Sigmoid colon (tissue), 7 donors: ENCODE measurements at regions of chr5 and their contacts with region 1.

Region 1: GRCh38 chr5:140145818-140146522 is 20.2 kb downstream of the IGIP start:
- DNase-seq: peak; percentile 85
- H3K4me3 ChIP-seq: peak overlapping the region; percentile 25 to 50 (median 47)
- H3K27ac ChIP-seq: peak overlapping the region in 1 of 4 donors; percentile 45
- H3K4me1 ChIP-seq: peaks cover 0 to 28% (median 22%) of the 10 kb centered on the region in 4 donors
- H3K27me3 ChIP-seq: no peaks in the 10 kb centered on the region
- CTCF ChIP-seq: peak in 3 of 4 experiments; percentile 2 to 84 (median 51)
- EP300 ChIP-seq: no peak
- POLR2A ChIP-seq: no peak

Region 2: DNA sequence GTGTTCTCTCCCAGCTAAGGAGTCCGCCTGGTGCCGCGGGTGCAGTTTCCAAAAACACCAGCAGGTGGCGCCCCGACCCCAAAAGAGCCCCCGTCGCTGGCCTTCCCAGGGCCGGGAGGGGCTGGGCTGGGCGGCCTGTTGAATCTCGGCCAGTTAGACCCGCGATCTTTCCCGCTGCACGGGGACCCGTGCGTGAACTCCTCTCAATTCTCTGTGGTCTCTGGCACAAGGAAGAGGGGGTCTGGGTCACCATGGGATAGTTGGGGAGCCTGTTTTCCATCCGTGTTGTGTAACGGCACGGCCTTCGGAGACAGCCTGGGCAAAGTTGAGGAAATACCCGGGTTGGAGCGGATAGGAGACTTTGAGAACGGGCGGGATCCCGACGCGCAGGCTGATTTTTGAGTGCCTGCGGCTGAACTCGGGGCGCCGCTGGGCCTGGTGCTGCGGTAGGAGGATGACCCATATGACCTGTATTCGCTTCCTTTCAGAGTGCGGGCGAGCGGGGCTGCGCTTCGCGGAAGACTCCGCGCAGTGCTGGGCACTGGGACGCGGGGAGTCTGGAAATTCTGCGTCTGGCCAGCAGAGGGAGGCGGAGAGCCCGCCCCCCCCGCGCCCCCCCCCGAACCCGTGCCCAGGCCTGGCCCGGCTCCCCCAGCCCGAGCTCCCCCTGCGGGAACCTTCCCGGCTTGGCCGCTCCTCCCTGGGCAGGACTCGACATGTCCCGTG is 358.2 kb before region 1 on chr5:
- intact Hi-C with region 1: loop called (anchors 5 kb)
- DNase-seq: peak; percentile 92
- H3K4me3 ChIP-seq: peak overlapping the region; percentile 42 to 64 (median 56)
- H3K27ac ChIP-seq: peak overlapping the region; percentile 67 to 76 (median 70)
- H3K4me1 ChIP-seq: peaks cover 0 to 13% (median 10%) of the 10 kb centered on the region in 4 donors
- H3K27me3 ChIP-seq: no peaks in the 10 kb centered on the region
- CTCF ChIP-seq: peak; percentile 80 to 98 (median 90)
- EP300 ChIP-seq: no peak
- POLR2A ChIP-seq: no peak

Region 3: GRCh38 chr5:139863855-139864558 is 282.0 kb before region 1 on chr5:
- intact Hi-C with region 1: loop called (anchors 10 kb)
- DNase-seq: peak; percentile 83
- H3K4me3 ChIP-seq: no peak overlapping the region
- H3K27ac ChIP-seq: peak overlapping the region in 2 of 4 donors; percentile 53 to 54
- H3K4me1 ChIP-seq: peaks cover 0 to 17% (median 15%) of the 10 kb centered on the region in 4 donors
- H3K27me3 ChIP-seq: no peaks in the 10 kb centered on the region
- CTCF ChIP-seq: peak; percentile 57 to 86 (median 76)
- EP300 ChIP-seq: no peak
- POLR2A ChIP-seq: no peak

Region 4: GRCh38 chr5:140073296-140073695 is 72.7 kb before region 1 on chr5:
- intact Hi-C with region 1: loop called (anchors 2 kb)
- DNase-seq: no peak
- H3K4me3 ChIP-seq: no peak overlapping the region
- H3K27ac ChIP-seq: no peak overlapping the region
- H3K4me1 ChIP-seq: peaks cover 0 to 4% (median 0%) of the 10 kb centered on the region in 4 donors
- H3K27me3 ChIP-seq: no peaks in the 10 kb centered on the region
- CTCF ChIP-seq: peak; percentile 49 to 67 (median 58)
- EP300 ChIP-seq: no peak
- POLR2A ChIP-seq: no peak

Region 5: GRCh38 chr5:140107312-140108083 is 38.5 kb before region 1 on chr5:
- intact Hi-C with region 1: loop called (anchors 2 kb)
- DNase-seq: peak; percentile 96
- H3K4me3 ChIP-seq: peak overlapping the region; percentile 77 to 86 (median 80)
- H3K27ac ChIP-seq: peak overlapping the region; percentile 93 to 99 (median 96)
- H3K4me1 ChIP-seq: peaks cover 0 to 37% (median 25%) of the 10 kb centered on the region in 4 donors
- H3K27me3 ChIP-seq: no peaks in the 10 kb centered on the region
- CTCF ChIP-seq: no peak
- EP300 ChIP-seq: peak in 1 of 4 donors; percentile 34
- POLR2A ChIP-seq: peak in 1 of 2 donors; percentile 67

Region 6: DNA sequence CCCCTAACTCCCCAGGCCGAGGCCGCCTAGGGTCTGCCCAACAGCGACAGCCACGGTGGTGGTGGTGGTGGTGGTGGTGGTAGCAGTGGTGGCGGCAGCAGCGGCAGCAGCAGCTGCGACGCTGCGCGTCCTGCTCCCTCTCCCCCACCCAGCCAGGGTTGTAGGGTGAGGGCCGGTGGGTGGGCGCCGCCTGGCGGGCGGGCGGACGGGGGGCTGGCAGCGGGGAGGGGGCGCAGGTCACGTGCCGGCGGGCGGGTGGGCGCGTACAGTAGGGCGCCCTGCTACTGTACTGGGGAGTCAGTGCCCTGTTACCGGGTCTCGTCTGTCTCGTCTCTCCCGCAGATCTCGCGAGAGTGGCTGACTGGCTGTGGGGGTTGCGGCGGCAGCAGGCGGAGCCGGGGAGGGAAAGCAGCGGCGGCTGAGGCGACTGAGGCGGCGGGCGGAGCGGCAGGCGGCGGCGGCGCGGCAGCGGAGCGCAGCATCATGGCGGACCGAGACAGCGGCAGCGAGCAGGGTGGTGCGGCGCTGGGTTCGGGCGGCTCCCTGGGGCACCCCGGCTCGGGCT is 32.2 kb before region 1 on chr5 and contains the start of gene PURA:
- intact Hi-C with region 1: loop called (anchors 2 kb)
- DNase-seq: peak; percentile 98
- H3K4me3 ChIP-seq: peak within 1 kb of the TSS; percentile 68 to 85 (median 76)
- H3K27ac ChIP-seq: peak within 1 kb of the TSS; percentile 93 to 96 (median 96)
- H3K4me1 ChIP-seq: peaks cover 0 to 68% (median 61%) of the 10 kb centered on the region in 4 donors
- H3K27me3 ChIP-seq: no peaks in the 10 kb centered on the region
- CTCF ChIP-seq: no peak
- EP300 ChIP-seq: no peak
- POLR2A ChIP-seq: peak; percentile 19 to 50
- total RNA-seq, gene PURA: 36.4 to 59.8 (median 40.3) TPM

Region 7: DNA sequence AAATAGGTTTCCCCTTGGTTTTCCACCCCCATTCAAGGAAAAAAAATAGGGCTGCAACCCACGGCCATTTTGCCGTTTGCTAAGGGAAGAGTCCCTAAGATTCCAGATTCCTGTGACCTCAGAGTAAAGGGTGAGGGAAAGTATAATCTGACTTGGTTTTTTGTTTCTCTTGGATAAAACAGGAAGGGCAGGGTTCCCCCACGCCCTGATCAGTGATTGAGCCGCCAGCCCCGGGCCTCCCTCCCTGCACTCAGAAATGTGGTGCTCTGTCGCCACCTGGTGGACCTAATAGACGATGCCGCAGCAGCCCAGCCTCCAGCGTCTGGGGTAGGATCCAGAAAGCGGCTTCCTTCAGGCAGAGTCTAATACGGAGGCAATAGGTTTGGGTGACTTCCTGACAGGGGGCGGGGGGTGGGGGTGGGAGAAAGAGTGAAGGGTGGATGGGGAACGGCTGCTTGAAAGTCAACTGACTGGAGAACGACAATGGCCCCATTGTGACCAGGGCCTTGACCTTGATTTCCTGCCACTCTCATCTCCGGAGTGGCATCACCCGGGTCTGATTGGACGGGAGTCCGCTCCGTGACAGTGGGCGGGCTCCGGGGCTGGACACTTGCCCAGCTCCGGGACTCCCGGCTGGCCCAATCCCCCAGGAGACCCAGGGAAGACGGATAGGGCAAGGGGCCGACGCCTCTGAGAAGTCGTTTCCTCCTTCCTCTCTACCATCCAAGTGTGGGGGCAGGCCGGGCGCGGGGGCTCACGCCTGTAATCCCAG is 11.2 kb after region 1 on chr5:
- intact Hi-C with region 1: loop called (anchors 1 kb)
- DNase-seq: peak; percentile 93
- H3K4me3 ChIP-seq: peak overlapping the region; percentile 10 to 42 (median 35)
- H3K27ac ChIP-seq: peak overlapping the region; percentile 7 to 61 (median 27)
- H3K4me1 ChIP-seq: peaks cover 0 to 16% (median 7%) of the 10 kb centered on the region in 4 donors
- H3K27me3 ChIP-seq: no peaks in the 10 kb centered on the region
- CTCF ChIP-seq: peak; percentile 75 to 95 (median 90)
- EP300 ChIP-seq: no peak
- POLR2A ChIP-seq: no peak